BJ (cell line): ENCODE measurements at regions of chr2 and their contacts with region 1.

Region 1: GRCh38 chr2:165621086-165621560 is 151.6 kb downstream of the CSRNP3 start:
- DNase-seq: peak; percentile 18
- H3K4me3 ChIP-seq: no peak overlapping the region
- H3K27me3 ChIP-seq: no peaks in the 10 kb centered on the region
- CTCF ChIP-seq: no peak

Region 2: DNA sequence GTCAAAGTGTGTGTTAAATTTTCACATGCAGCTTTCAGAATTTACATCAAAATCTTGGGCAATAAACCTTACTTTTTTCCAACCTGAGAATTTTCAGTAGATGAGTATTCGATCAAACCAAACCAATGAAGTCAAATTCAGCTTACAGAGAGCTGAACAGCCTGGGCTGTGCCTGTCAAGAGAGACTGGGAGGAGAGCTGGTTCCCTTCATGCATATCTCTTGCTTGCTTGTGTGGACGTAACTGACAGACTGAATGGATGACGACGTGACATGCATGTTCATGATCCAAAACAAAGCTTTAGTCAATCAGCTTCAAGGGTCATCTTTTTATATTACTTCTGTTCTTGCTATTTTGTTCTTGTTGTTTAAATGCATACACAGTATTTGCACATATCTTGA is 27.7 kb after region 1 on chr2:
- CTCF ChIA-PET with region 1: no interaction called
- POLR2A ChIA-PET with region 1: interaction called, 15 read pairs
- DNase-seq: no peak
- H3K4me3 ChIP-seq: no peak overlapping the region
- H3K27me3 ChIP-seq: no peaks in the 10 kb centered on the region
- CTCF ChIP-seq: no peak